Activated CD4-positive, alpha-beta T cell treated with anti-CD3 and anti-CD28 coated beads for 36 hours (primary cell): ENCODE measurements at regions of chr12 and their contacts with region 1.

Region 1: DNA sequence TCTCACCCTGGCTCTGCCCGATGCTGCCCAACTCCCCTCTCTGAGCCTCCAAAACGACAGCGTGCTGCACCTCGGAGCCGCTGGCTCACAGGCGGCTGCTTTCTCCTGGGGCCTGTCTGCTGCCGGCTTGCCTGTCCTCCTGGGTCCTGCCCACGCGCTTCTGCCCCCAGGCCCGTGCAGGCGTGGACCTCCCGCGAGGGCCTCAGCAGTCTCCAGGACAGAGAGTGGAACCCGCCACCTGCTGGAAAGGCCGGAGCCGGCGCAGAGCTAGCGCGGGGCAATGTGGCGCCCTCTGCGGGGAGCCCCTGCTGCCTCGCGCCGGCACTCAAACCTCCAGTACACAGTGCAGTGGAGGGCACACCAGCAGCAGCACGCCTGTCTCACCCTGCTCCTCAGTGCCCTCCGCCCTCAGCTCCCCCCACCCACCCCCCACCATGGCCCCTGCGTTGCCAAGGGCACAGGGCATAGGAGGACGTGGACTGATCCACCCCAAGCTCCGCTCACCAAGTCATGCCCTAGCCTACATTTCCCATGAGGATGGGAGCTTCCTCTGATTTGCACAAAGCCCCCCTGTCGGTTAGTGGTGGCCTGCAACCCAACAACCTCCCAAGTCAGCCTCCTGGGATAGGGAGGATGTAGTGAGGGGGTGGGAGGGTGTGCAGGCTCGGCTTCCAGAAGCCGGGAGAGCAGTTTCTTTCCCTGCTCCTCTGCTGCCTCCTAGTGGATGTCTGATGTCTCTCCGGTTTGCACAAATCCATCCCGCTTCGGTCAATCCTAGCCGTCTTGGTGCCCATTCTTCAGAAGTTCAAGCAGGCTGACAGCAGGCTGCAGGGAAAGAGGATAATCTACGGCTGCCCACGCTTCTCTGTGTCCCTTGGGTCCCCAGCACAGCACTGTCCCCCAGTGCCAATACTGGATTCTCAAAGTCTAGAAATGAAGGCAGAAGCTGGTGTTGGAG is 25.2 kb downstream of the KRT8 start:
- DNase-seq: peak; percentile 88
- ATAC-seq: peak; percentile 95
- H3K4me3 Mint-ChIP-seq: peak overlapping the region; percentile 59
- H3K27ac Mint-ChIP-seq: no peak overlapping the region
- H3K4me1 Mint-ChIP-seq: peaks cover 8% of the 10 kb centered on the region
- H3K27me3 Mint-ChIP-seq: peaks cover 5% of the 10 kb centered on the region

Region 2: DNA sequence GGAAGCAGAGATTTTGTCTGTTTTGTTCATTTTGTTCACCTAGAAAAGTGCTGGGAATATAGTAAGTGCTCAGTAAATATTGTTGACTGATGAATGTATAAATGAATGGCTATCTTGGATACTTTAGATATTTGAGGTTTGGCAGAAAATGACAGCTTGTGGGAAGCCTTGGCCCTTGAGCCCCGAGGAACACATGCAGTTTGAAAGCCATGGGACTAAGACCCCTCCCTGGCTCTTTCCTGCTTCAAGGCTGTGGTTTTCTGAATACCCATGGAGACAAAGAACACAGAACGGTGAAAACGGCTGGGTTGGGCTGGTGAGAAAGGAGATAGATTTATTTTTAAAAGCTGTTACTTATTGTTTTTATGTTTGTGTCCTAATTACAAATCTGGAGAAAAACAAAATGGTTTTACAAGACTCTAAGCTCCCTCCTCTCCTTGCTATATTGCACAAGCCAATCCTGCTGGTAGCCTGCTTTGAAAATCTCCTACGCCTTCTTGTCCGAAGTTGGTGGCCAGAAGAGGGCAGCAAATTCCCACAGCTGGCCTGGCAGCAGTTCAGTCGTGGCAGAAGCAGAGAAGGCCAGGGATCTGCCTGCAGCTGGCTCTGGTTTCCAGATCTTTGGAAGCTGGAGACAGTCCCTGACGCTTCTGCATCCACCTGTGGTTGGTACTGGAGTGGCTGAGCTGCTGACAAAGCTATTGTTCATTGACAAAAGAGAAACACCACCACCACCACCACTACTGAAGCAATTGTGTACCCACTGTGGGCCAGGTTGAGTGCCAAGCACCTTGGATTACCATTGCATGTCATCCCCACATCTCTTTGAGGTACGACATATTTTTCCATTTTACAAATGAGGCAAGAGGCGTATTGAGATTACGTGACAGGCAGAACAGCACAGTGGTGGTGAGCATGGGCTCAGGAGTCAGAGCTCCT is 507.2 kb before region 1 on chr12:
- CTCF ChIA-PET with region 1: interaction called, 19 read pairs
- POLR2A ChIA-PET with region 1: no interaction called
- intact Hi-C with region 1: loop called (anchors 1 kb)
- DNase-seq: peak; percentile 76
- ATAC-seq: peak; percentile 47
- H3K4me3 Mint-ChIP-seq: no peak overlapping the region
- H3K27ac Mint-ChIP-seq: no peak overlapping the region
- H3K4me1 Mint-ChIP-seq: no peaks in the 10 kb centered on the region
- H3K27me3 Mint-ChIP-seq: peaks cover 4% of the 10 kb centered on the region

Region 3: DNA sequence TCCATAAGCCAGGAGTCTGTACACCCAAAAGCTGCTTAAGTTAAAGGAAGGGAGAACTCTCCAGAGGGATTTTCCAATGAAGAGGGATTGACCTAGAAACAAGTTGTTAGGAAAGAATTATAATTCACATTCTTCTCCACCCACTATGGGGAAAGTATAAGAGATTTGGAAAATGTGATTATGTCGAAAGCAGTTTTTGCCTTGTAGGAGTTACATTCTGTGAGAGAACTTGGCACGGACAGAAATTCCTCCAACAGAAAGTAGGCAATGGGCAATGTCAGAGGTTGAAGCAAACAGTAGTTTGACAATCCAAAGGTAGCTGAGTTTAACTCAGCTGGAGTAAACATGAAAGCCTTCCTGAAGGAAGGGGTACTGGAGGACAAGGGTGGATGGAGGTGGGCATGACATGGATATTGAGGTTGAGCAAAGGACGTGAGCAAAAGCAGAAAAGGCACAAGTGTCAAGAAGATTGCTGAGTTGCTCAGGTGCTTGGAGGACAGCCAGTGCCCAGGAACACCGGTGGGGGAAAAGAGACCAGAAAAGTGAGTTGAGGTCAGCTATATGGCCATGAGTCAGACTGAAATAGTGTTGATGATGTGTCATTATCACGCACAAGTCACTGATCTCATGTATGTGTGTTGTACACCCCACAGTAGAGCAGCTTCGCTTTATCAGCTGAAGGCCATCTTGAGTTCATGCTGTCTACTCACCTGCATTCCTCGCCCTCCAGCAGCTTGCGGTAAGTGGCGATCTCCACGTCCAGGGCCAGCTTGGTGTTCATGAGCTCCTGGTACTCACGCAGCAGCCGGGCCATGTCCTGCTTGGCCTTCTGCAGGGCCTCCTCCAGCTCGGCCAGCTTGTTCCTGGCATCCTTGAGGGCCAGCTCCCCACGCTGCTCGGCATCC is 363.5 kb before region 1 on chr12:
- CTCF ChIA-PET with region 1: no interaction called
- POLR2A ChIA-PET with region 1: no interaction called
- intact Hi-C with region 1: no loop called
- DNase-seq: no peak
- ATAC-seq: no peak
- H3K4me3 Mint-ChIP-seq: no peak overlapping the region
- H3K27ac Mint-ChIP-seq: no peak overlapping the region
- H3K4me1 Mint-ChIP-seq: no peaks in the 10 kb centered on the region
- H3K27me3 Mint-ChIP-seq: peaks cover 5% of the 10 kb centered on the region

Region 4: GRCh38 chr12:52582971-52583456 is 296.7 kb before region 1 on chr12:
- CTCF ChIA-PET with region 1: interaction called, 70 read pairs
- POLR2A ChIA-PET with region 1: no interaction called
- intact Hi-C with region 1: loop called (anchors 1 kb)
- DNase-seq: peak; percentile 80
- ATAC-seq: peak; percentile 78
- H3K4me3 Mint-ChIP-seq: no peak overlapping the region
- H3K27ac Mint-ChIP-seq: no peak overlapping the region
- H3K4me1 Mint-ChIP-seq: peaks cover 51% of the 10 kb centered on the region
- H3K27me3 Mint-ChIP-seq: no peaks in the 10 kb centered on the region

Region 5: DNA sequence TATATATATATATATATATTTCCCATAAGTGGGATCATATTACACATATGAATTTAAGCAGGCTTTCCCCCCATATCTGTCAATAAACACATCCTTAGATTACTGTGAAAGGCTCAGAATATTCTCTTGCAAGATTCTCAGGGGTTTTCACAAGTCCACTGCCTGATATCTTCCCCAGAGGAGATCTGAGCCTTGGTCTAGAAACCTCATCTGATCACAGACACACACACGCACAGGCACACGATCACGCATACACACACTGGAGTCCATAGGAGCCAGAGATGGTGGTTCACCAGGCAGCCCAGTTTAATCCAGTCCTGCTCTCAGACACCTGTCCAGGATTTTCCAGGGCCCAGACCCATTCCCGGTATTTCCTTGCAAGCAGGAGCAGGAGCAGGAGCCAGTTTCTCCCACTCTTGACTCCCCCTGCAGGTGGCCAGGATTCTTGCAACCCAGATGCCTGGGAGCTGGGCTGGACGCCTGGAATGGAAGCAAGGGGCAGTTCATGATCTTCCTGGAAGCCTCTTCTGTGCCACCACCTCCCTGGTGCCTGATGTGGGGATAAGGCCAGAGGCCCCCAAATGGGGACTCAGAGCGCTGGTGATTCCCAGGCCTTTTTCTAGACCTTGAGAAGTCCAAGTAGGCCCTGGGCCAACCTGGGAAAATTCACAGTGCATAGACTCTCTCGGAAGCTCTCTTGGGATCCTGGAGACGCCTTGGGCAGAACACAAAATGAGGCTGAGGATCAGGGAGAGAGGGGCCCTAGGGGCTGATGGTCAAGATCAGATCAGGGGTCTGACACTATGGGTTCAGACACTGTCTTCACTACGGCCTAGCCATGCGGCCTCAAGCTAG is 14.4 kb before region 1 on chr12:
- CTCF ChIA-PET with region 1: interaction called, 110 read pairs
- POLR2A ChIA-PET with region 1: no interaction called
- intact Hi-C with region 1: no loop called
- DNase-seq: peak; percentile 56
- ATAC-seq: peak; percentile 39
- H3K4me3 Mint-ChIP-seq: no peak overlapping the region
- H3K27ac Mint-ChIP-seq: no peak overlapping the region
- H3K4me1 Mint-ChIP-seq: peaks cover 12% of the 10 kb centered on the region
- H3K27me3 Mint-ChIP-seq: no peaks in the 10 kb centered on the region

Region 6: GRCh38 chr12:53220801-53221202 is 341.1 kb after region 1 on chr12:
- CTCF ChIA-PET with region 1: no interaction called
- POLR2A ChIA-PET with region 1: no interaction called
- intact Hi-C with region 1: no loop called
- DNase-seq: peak; percentile 93
- ATAC-seq: peak; percentile 57
- H3K4me3 Mint-ChIP-seq: peak overlapping the region; percentile 83
- H3K27ac Mint-ChIP-seq: peak overlapping the region; percentile 87
- H3K4me1 Mint-ChIP-seq: peaks cover 78% of the 10 kb centered on the region
- H3K27me3 Mint-ChIP-seq: no peaks in the 10 kb centered on the region